ENCODE measurements at regions of chr11 and their contacts with region 1.

Region 1: DNA sequence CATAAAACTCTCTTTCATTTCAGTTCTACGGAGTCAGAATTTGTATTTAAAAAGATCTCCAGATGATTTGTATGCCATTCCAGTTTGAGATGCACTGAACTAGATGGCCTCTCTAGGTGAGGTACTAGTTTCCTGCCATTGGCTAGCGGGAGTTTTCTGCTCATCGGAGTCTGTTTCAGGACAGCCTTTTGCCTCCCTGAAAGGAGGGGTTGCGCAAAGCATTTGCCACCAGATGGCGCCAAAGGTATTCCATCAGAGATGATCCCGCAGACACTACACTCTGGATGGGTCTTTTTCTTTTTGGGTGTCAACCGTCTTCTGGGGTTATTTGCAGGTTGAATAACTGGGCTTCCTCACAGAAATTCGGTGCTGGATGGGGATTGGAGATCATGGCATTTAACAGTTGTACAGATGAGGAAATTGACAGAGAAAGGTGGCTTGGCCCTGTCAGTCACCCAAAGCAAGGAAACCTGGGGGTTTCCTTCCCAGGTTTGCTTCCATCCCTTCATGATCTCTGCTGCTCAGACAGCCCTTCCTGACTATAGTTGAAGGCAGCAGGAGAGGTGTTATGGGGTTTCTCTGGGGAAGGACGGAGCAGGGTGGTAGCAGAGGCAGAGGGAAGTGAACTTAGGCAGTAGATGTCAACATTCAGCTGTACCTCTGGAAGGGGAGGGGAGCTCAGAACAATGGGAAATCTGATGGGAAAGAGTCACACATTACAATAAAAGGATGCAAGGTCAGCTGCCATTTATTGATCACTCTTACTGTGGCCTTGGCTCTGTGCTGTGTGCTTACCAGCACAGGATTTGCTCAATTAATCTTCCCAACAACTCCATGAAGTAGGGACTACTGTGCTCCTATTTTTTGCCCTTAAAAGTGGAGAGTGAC is 81.6 kb downstream of the CCDC81 start:
- DNase-seq: peak; percentile 67
- ATAC-seq: peak; percentile 54
- H3K4me3 ChIP-seq: no peak overlapping the region
- H3K4me3 Mint-ChIP-seq: no peak overlapping the region
- H3K27ac ChIP-seq: no peak overlapping the region
- H3K27ac Mint-ChIP-seq: no peak overlapping the region
- H3K4me1 ChIP-seq: peaks cover 0 to 3% of the 10 kb centered on the region in 2 donors
- H3K4me1 Mint-ChIP-seq: no peaks in the 10 kb centered on the region
- H3K27me3 ChIP-seq: no peaks in the 10 kb centered on the region
- H3K27me3 Mint-ChIP-seq: peaks cover 4% of the 10 kb centered on the region
- CTCF ChIP-seq: peak; percentile 91

Region 2: GRCh38 chr11:86442420-86442819 is 13.9 kb before region 1 on chr11:
- CTCF ChIA-PET with region 1: interaction called, 17 read pairs
- POLR2A ChIA-PET with region 1: no interaction called
- intact Hi-C with region 1: no loop called
- DNase-seq: no peak
- ATAC-seq: no peak
- H3K4me3 ChIP-seq: no peak overlapping the region
- H3K4me3 Mint-ChIP-seq: no peak overlapping the region
- H3K27ac ChIP-seq: no peak overlapping the region
- H3K27ac Mint-ChIP-seq: no peak overlapping the region
- H3K4me1 ChIP-seq: no peaks in the 10 kb centered on the region
- H3K4me1 Mint-ChIP-seq: no peaks in the 10 kb centered on the region
- H3K27me3 ChIP-seq: no peaks in the 10 kb centered on the region
- H3K27me3 Mint-ChIP-seq: no peaks in the 10 kb centered on the region
- CTCF ChIP-seq: no peak

Region 3: DNA sequence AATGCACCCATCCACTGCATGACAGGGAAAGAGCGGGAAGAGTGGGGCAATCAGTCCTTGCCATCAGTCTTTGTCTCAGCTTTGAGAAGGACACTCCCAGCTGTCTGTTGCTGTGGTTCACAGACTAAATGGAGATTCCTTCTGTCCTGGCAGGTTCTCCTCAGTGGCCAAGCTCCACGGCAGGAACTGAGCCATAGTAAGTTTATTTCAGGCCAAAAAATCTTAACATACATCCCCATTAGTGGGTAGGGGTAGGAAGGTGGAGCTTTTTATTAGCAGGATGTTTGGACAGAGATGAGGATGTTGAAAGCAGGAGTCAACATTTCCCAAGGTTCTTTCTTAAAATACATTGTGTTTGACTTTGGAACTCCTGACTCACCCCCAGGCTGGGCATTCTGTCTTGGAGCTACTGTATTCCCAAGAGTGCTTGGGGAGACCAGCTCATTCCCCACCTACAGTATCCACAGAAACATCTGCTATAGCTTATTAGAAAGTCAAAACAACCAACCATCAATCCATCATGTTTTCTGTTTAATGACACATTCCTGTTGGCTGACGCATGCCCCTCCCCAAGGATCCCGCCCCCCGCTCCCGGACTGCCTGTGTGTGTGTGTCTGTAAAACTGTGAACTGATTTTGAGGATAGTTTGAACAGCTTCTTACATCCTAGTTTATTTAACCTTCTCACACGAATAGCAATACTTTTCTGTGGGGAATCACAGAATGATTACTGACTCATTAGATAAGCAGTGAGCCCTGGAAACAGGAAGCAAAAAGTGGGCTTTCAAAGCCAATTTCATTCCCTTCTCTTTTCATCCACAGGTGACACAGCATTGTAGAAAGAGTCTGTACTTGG is 27.9 kb after region 1 on chr11:
- CTCF ChIA-PET with region 1: no interaction called
- POLR2A ChIA-PET with region 1: no interaction called
- intact Hi-C with region 1: no loop called
- DNase-seq: no peak
- ATAC-seq: no peak
- H3K4me3 ChIP-seq: no peak overlapping the region
- H3K4me3 Mint-ChIP-seq: no peak overlapping the region
- H3K27ac ChIP-seq: no peak overlapping the region
- H3K27ac Mint-ChIP-seq: no peak overlapping the region
- H3K4me1 ChIP-seq: no peaks in the 10 kb centered on the region
- H3K4me1 Mint-ChIP-seq: no peaks in the 10 kb centered on the region
- H3K27me3 ChIP-seq: no peaks in the 10 kb centered on the region
- H3K27me3 Mint-ChIP-seq: no peaks in the 10 kb centered on the region
- CTCF ChIP-seq: no peak

Region 4: GRCh38 chr11:86551286-86552092 is 95.2 kb after region 1 on chr11:
- CTCF ChIA-PET with region 1: no interaction called
- POLR2A ChIA-PET with region 1: no interaction called
- intact Hi-C with region 1: no loop called
- DNase-seq: no peak
- ATAC-seq: no peak
- H3K4me3 ChIP-seq: no peak overlapping the region
- H3K4me3 Mint-ChIP-seq: no peak overlapping the region
- H3K27ac ChIP-seq: no peak overlapping the region
- H3K27ac Mint-ChIP-seq: no peak overlapping the region
- H3K4me1 ChIP-seq: no peaks in the 10 kb centered on the region
- H3K4me1 Mint-ChIP-seq: no peaks in the 10 kb centered on the region
- H3K27me3 ChIP-seq: no peaks in the 10 kb centered on the region
- H3K27me3 Mint-ChIP-seq: no peaks in the 10 kb centered on the region
- CTCF ChIP-seq: no peak

Region 5: GRCh38 chr11:86818466-86819192 is 362.3 kb after region 1 on chr11:
- CTCF ChIA-PET with region 1: interaction called, 13 read pairs
- POLR2A ChIA-PET with region 1: no interaction called
- intact Hi-C with region 1: no loop called
- DNase-seq: peak; percentile 52
- ATAC-seq: no peak
- H3K4me3 ChIP-seq: no peak overlapping the region
- H3K4me3 Mint-ChIP-seq: no peak overlapping the region
- H3K27ac ChIP-seq: no peak overlapping the region
- H3K27ac Mint-ChIP-seq: no peak overlapping the region
- H3K4me1 ChIP-seq: no peaks in the 10 kb centered on the region
- H3K4me1 Mint-ChIP-seq: no peaks in the 10 kb centered on the region
- H3K27me3 ChIP-seq: peaks cover 0 to 4% (median 2%) of the 10 kb centered on the region in 4 experiments
- H3K27me3 Mint-ChIP-seq: peaks cover 13% of the 10 kb centered on the region
- CTCF ChIP-seq: peak; percentile 88

Measured in B cell (primary cell).